ENCODE measurements at regions of chr3 and their contacts with region 1.

Region 1: GRCh38 chr3:126982471-126983175 is at the start of gene PLXNA1:
- DNase-seq: peak; percentile 92
- ATAC-seq: peak; percentile 75
- H3K4me3 Mint-ChIP-seq: peak within 1 kb of the TSS; percentile 87
- H3K27ac Mint-ChIP-seq: peak within 1 kb of the TSS; percentile 97
- H3K4me1 Mint-ChIP-seq: peaks cover 29% of the 10 kb centered on the region
- H3K27me3 Mint-ChIP-seq: peaks cover 4% of the 10 kb centered on the region
- CTCF ChIP-seq: peak; percentile 43
- total RNA-seq, gene PLXNA1: 47.2 and 55.2 TPM in 2 replicates

Region 2: DNA sequence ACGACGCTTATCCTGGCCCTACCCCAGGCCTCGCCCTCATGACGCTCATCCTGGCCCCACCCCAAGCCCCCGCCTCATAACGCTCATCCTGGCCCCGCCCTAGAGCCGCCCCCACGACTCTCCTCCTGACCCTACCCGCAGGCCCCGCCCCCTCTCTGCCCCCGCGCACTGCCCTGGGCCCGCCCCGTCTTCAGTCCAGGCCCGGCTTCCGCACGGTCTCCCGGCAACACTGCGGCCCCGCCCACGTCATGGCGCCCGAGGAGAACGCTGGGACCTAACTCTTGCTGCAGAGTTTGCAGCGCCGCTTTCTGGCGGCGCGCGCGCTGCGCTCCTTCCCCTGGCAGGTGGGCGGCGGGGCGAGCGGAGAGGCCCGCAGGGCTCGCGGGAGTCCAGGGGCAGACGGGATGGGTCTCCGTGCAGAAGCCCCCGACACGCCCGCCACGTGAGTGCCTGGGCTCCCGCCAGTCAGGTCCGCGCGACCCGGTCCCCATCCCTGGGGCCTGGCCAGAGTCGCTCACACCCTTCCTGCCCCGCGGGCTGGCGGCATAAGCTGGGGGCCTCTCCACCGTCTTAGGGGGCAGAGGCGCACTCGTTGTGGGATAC is 1066.1 kb before region 1 on chr3:
- CTCF ChIA-PET with region 1: no interaction called
- POLR2A ChIA-PET with region 1: no interaction called
- intact Hi-C with region 1: loop called (anchors 5 kb)
- DNase-seq: peak; percentile 91
- ATAC-seq: peak; percentile 90
- H3K4me3 Mint-ChIP-seq: peak overlapping the region; percentile 90
- H3K27ac Mint-ChIP-seq: peak overlapping the region; percentile 90
- H3K4me1 Mint-ChIP-seq: peaks cover 11% of the 10 kb centered on the region
- H3K27me3 Mint-ChIP-seq: no peaks in the 10 kb centered on the region
- CTCF ChIP-seq: no peak

Region 3: DNA sequence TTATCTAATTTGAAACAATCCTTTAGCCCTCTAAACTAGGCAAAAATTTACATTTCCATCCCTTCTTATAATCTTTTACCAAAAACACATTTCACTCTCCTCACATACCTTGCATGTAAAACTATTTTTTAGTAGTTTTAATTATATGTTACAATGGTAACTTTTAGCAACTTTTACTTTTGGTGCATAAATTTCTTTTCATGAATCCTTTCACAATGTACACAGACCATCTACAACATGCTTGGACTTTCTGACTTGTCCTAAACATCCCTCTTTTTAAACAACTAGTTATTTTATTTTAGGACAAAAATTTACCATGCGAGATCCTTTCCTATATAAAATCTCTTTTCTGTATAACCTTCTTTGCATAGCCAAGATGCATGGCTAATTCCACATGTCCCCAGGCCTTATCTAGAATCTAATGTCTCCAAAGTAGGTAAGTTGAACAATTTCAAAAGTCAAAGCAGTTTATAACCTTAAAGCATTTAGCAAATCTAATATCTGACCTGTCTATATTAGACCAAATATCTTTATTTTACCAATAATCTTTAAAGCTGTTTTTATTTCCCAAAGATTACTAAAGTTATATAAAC is 787.8 kb before region 1 on chr3:
- CTCF ChIA-PET with region 1: no interaction called
- POLR2A ChIA-PET with region 1: no interaction called
- intact Hi-C with region 1: no loop called
- DNase-seq: no peak
- ATAC-seq: no peak
- H3K4me3 Mint-ChIP-seq: no peak overlapping the region
- H3K27ac Mint-ChIP-seq: no peak overlapping the region
- H3K4me1 Mint-ChIP-seq: no peaks in the 10 kb centered on the region
- H3K27me3 Mint-ChIP-seq: peaks cover 6% of the 10 kb centered on the region
- CTCF ChIP-seq: no peak

Region 4: DNA sequence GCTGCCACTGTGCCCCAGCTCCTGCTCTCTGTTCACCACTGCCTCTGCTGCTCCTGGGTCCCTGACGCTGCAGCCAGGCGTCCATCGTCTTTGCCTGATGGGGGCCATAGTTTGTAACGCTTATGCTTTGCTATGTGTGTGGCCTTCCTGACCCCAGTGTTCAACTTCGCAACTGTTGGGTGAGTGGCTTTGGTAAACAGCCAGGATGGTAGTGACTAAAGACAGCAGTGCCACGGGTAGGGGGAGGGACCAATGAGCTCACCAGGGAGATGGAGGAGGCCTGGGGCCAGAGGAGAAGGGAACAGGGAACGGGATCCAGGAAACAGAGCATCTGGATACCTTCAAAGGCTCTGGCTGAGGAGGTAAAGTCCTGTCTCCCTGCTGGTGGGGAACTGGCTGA is 726.4 kb before region 1 on chr3:
- CTCF ChIA-PET with region 1: no interaction called
- POLR2A ChIA-PET with region 1: no interaction called
- intact Hi-C with region 1: no loop called
- DNase-seq: no peak
- ATAC-seq: no peak
- H3K4me3 Mint-ChIP-seq: no peak overlapping the region
- H3K27ac Mint-ChIP-seq: no peak overlapping the region
- H3K4me1 Mint-ChIP-seq: no peaks in the 10 kb centered on the region
- H3K27me3 Mint-ChIP-seq: peaks cover 5% of the 10 kb centered on the region
- CTCF ChIP-seq: no peak

Region 5: GRCh38 chr3:126487151-126487771 is 495.4 kb before region 1 on chr3:
- CTCF ChIA-PET with region 1: no interaction called
- POLR2A ChIA-PET with region 1: no interaction called
- intact Hi-C with region 1: no loop called
- DNase-seq: no peak
- ATAC-seq: no peak
- H3K4me3 Mint-ChIP-seq: no peak overlapping the region
- H3K27ac Mint-ChIP-seq: no peak overlapping the region
- H3K4me1 Mint-ChIP-seq: peaks cover 5% of the 10 kb centered on the region
- H3K27me3 Mint-ChIP-seq: no peaks in the 10 kb centered on the region
- CTCF ChIP-seq: no peak

Region 6: DNA sequence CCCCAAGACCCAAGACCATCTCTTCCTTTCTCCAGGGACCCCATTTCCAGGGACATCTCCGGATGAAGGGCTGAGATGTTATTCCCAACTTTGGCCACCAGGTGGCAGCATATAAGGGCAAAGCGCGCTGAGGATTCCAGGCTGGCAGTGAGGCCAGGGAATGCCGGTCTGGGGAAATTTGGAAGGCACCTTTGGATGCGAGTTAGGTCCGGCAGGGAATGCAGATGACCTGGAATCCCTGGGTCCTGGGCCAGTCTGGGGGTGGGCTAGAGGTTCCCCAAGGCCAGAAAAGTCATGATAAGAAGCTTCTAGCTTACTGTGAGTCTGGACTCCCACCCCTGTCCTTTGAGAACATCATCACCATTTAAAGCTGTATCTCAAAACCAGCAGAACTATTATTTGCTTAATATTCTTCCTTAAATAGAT is 460.2 kb before region 1 on chr3:
- CTCF ChIA-PET with region 1: no interaction called
- POLR2A ChIA-PET with region 1: no interaction called
- intact Hi-C with region 1: loop called (anchors 2 kb)
- DNase-seq: peak; percentile 37
- ATAC-seq: no peak
- H3K4me3 Mint-ChIP-seq: no peak overlapping the region
- H3K27ac Mint-ChIP-seq: no peak overlapping the region
- H3K4me1 Mint-ChIP-seq: no peaks in the 10 kb centered on the region
- H3K27me3 Mint-ChIP-seq: peaks cover 24% of the 10 kb centered on the region
- CTCF ChIP-seq: peak; percentile 81

Region 7: GRCh38 chr3:126752303-126752842 is 230.2 kb before region 1 on chr3:
- CTCF ChIA-PET with region 1: interaction called, 28 read pairs
- POLR2A ChIA-PET with region 1: interaction called, 4 read pairs
- intact Hi-C with region 1: loop called (anchors 1 kb)
- DNase-seq: peak; percentile 69
- ATAC-seq: peak; percentile 95
- H3K4me3 Mint-ChIP-seq: no peak overlapping the region
- H3K27ac Mint-ChIP-seq: no peak overlapping the region
- H3K4me1 Mint-ChIP-seq: peaks cover 3% of the 10 kb centered on the region
- H3K27me3 Mint-ChIP-seq: no peaks in the 10 kb centered on the region
- CTCF ChIP-seq: peak; percentile 37

Region 8: GRCh38 chr3:126954141-126954842 is 28.3 kb before region 1 on chr3:
- CTCF ChIA-PET with region 1: interaction called, 15 read pairs
- POLR2A ChIA-PET with region 1: interaction called, 52 read pairs
- intact Hi-C with region 1: loop called (anchors 1 kb)
- DNase-seq: no peak
- ATAC-seq: peak; percentile 80
- H3K4me3 Mint-ChIP-seq: peak overlapping the region; percentile 72
- H3K27ac Mint-ChIP-seq: peak overlapping the region; percentile 94
- H3K4me1 Mint-ChIP-seq: peaks cover 40% of the 10 kb centered on the region
- H3K27me3 Mint-ChIP-seq: no peaks in the 10 kb centered on the region
- CTCF ChIP-seq: no peak

Region 9: GRCh38 chr3:127590593-127591477 is 608.2 kb after region 1 on chr3 and contains the start of gene TPRA1:
- CTCF ChIA-PET with region 1: no interaction called
- POLR2A ChIA-PET with region 1: no interaction called
- intact Hi-C with region 1: loop called (anchors 2 kb)
- DNase-seq: peak; percentile 79
- ATAC-seq: peak; percentile 82
- H3K4me3 Mint-ChIP-seq: peak within 1 kb of the TSS; percentile 90
- H3K27ac Mint-ChIP-seq: peak within 1 kb of the TSS; percentile 85
- H3K4me1 Mint-ChIP-seq: peaks cover 28% of the 10 kb centered on the region
- H3K27me3 Mint-ChIP-seq: no peaks in the 10 kb centered on the region
- CTCF ChIP-seq: no peak
- total RNA-seq, gene TPRA1: 17.5 and 18.3 TPM in 2 replicates